Right cardiac atrium (tissue), 5 donors: ENCODE measurements at regions of chr19 and their contacts with region 1.

Region 1: GRCh38 chr19:18761531-18762110 is 29.5 kb downstream of the COMP start:
- DNase-seq: peak in 2 of 3 donors; percentile 11 to 49
- ATAC-seq: peak in 1 of 2 donors; percentile 1
- H3K4me3 ChIP-seq: no peak overlapping the region
- H3K27ac ChIP-seq: no peak overlapping the region
- H3K4me1 ChIP-seq: no peaks in the 10 kb centered on the region
- H3K27me3 ChIP-seq: no peaks in the 10 kb centered on the region

Region 2: DNA sequence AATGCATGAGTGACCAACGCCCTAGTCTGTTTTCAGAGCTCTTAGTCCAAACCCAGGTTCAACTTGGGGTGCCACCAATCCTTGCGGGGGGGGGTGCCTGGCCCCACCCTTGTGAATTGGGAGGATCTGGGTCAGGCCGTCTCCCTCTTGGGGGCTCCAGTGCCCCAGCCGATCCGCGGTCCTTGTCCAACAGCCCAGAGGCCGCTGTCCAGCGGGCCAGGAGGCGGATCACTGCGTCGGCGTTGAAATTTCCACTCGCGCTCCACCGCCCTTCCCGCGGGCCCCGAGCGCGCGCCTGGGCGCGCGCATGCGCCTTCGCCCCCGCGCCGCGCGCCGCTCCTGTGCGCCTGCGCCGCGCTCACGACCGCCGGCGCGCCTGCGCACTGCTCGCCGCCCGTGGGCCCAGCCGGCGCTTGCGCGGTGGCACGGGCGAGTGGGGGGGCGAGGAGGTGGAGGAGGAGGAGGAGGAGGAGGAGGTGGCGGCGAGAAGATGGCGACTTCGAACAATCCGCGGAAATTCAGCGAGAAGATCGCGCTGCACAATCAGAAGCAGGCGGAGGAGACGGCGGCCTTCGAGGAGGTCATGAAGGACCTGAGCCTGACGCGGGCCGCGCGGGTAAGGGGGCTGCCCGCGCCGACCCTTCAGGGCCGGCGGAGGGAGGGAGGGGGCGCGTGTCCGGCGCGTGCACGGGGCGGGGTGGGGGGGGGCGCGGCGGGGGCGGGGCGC is 78.2 kb before region 1 on chr19 and contains the start of gene CRTC1:
- intact Hi-C with region 1: loop called in 1 of 4 experiments (anchors 2 kb)
- DNase-seq: peak; percentile 91 to 97 (median 95)
- ATAC-seq: peak; percentile 84 to 85
- H3K4me3 ChIP-seq: peak within 1 kb of the TSS; percentile 84
- H3K27ac ChIP-seq: peak within 1 kb of the TSS; percentile 89
- H3K4me1 ChIP-seq: peaks cover 7% of the 10 kb centered on the region
- H3K27me3 ChIP-seq: no peaks in the 10 kb centered on the region
- total RNA-seq, gene CRTC1: 9.2 to 15.1 (median 13.6) TPM

Region 3: GRCh38 chr19:18809150-18809868 is 47.7 kb after region 1 on chr19:
- intact Hi-C with region 1: no loop called
- DNase-seq: peak; percentile 73 to 84 (median 77)
- ATAC-seq: peak; percentile 71 to 86
- H3K4me3 ChIP-seq: no peak overlapping the region
- H3K27ac ChIP-seq: peak overlapping the region; percentile 63
- H3K4me1 ChIP-seq: no peaks in the 10 kb centered on the region
- H3K27me3 ChIP-seq: no peaks in the 10 kb centered on the region